Cardiac septum (tissue), 1 donor: ENCODE measurements at regions of chr11 and their contacts with region 1.

Region 1: GRCh38 chr11:114159802-114160632 is 100.5 kb downstream of the ZBTB16 start:
- DNase-seq: peak; percentile 97

Region 2: GRCh38 chr11:114059278-114059983 is 100.6 kb before region 1 on chr11 and contains the start of gene ZBTB16:
- intact Hi-C with region 1: loop called (anchors 2 kb)
- DNase-seq: peak; percentile 93
- total RNA-seq, gene ZBTB16: 25.4 TPM

Region 3: DNA sequence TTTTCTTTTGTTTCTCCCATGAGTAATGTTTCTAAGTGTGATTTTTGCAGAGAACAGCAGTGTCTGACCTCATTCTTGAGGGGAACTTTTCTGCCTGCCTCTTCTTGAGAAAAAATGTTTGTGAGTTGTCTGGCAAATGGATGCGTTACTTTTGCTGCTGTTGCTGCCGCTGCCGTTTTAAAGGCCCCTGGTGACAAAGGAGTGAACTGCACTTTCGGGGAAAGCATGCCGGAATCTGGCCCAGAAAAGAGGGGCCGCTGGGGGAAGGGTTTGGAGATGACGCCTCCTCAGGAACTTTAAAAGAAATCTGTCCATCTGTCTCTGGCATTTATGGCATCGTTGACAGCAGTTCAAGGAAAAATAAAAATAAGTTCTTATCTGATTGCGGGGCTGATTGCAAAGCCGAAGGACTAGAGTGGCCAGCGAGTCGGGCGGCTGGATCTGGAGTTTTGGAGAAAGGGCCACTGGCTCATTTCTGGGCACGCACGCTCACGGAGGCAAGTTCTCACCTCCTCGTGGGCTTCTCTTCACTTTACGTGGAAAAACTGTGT is 84.1 kb before region 1 on chr11:
- intact Hi-C with region 1: loop called (anchors 5 kb)
- DNase-seq: peak; percentile 75

Region 4: DNA sequence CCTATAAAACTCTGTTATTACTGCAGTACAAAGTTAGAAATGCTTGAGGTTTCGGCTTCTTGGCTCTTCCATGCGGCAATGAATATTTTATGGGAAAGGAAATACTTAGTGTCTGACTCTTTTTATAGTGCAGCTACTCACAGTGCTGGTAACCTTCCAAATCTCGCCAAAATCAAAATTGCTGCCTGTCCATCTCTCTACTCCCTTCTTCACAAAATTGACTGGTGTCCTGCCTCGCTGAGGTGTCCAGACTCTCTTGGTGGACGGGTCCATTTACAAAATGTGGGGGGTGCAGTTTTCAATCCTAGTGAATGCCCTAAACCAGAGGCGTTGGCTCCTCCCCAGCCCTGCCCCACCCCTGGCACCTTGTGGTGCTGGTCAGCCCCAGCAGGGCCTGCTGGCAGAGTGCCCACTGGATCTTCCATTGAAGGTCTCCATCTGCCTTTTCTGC is 27.0 kb before region 1 on chr11:
- intact Hi-C with region 1: loop called (anchors 2 kb)
- DNase-seq: no peak

Region 5: GRCh38 chr11:114148013-114148382 is 12.0 kb before region 1 on chr11:
- intact Hi-C with region 1: no loop called
- DNase-seq: no peak

Region 6: DNA sequence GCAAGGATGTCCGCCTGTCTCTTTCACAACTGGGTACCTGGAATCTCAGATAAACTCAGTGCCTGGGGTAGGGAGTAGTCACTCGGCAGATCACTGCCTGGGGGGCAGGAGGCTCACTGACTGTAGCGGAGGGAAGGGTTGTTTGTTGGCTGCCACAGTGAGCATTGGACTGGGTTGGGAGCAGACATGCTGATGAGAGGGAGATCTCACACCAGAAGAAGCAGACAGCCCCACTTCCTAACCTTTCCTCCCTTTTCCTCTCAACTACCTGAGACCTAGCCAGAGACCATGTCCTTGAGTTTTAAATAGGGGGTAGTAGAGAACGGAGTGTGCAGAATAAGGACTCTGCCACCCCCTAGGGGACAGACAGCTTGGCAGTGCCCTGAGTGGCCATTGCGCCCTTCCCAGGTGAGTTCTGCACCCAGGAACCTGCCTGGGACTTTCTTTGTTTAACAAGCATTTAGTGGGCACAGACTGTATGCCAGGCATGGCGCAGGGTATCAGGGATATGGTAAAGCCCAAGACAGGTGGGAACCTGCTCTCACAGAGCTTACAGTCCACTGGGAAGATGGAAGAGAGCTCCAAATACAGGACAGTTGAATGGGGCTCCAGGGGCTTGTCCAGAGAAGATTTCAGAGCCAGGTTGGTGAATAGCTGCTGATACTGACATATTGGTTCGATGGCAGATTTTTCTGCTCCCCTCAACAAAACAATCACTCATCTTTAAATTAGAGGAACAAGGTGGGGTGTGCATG is 20.5 kb after region 1 on chr11:
- intact Hi-C with region 1: loop called (anchors 1 kb)
- DNase-seq: no peak